ENCODE measurements at regions of chr5 and their contacts with region 1.

Region 1: DNA sequence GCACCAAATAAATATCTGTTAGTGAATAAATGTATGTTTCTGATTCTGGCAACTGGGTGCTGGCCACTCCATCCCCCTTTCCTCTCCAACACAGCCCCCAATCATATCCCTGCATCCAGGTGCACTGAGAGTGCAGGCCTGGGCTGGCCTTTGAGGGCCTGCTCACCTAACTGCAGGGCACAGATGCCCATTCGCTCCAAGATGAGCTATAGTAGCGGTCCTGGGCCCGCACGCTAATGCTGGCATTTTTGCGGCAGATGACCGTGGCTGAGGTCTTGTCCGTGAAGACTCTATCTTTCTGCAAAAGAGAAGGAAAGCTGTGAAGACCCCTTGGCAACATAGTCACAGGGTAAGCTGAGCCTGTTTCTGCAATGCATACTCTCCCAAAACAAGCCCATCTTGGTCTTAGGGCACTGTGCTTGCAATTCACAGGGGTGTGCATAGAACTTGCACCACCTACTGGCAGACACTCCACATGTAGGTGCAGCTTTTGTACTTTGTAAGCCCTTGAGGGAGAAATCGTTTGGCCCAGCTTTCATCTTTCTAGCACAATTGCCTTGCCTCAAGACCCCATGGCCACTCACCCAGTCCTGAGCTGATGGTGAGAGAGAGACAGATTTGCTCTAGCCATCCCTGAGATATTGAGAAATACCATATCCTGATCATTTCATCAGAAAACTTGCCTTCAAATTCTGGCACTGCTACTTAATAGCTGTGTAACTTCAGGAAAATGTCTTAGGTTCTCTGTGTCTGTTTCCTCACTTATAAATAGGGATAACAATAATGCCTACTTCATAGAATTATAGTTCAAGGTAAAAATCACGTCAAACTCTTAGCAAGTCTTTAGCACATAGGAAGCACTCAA is 13.5 kb downstream of the IL12B start:
- DNase-seq: peak; percentile 35
- ATAC-seq: peak; percentile 96
- H3K4me3 ChIP-seq: no peak overlapping the region
- H3K27ac ChIP-seq: no peak overlapping the region
- H3K4me1 ChIP-seq: no peaks in the 10 kb centered on the region
- H3K27me3 ChIP-seq: peaks cover 6% of the 10 kb centered on the region
- CTCF ChIP-seq: peak; percentile 84

Region 2: GRCh38 chr5:159156426-159157238 is 160.1 kb before region 1 on chr5:
- CTCF ChIA-PET with region 1: interaction called, 12 read pairs
- POLR2A ChIA-PET with region 1: no interaction called
- in situ Hi-C with region 1: no loop called
- intact Hi-C with region 1: loop called (anchors 2 kb)
- DNase-seq: peak; percentile 32
- ATAC-seq: peak; percentile 91
- H3K4me3 ChIP-seq: no peak overlapping the region
- H3K27ac ChIP-seq: no peak overlapping the region
- H3K4me1 ChIP-seq: no peaks in the 10 kb centered on the region
- H3K27me3 ChIP-seq: no peaks in the 10 kb centered on the region
- CTCF ChIP-seq: peak; percentile 84

Region 3: GRCh38 chr5:159286420-159287035 is 30.2 kb before region 1 on chr5:
- CTCF ChIA-PET with region 1: interaction called, 10 read pairs
- POLR2A ChIA-PET with region 1: no interaction called
- in situ Hi-C with region 1: no loop called
- intact Hi-C with region 1: no loop called
- DNase-seq: no peak
- ATAC-seq: peak; percentile 45; the same call in 1 of the 2 replicates
- H3K4me3 ChIP-seq: no peak overlapping the region
- H3K27ac ChIP-seq: no peak overlapping the region
- H3K4me1 ChIP-seq: no peaks in the 10 kb centered on the region
- H3K27me3 ChIP-seq: no peaks in the 10 kb centered on the region
- CTCF ChIP-seq: peak; percentile 41; the same call in 1 of the 2 replicates

Region 4: GRCh38 chr5:159341914-159342313 is 25.2 kb after region 1 on chr5:
- CTCF ChIA-PET with region 1: no interaction called
- POLR2A ChIA-PET with region 1: no interaction called
- in situ Hi-C with region 1: no loop called
- intact Hi-C with region 1: no loop called
- DNase-seq: no peak
- ATAC-seq: no peak
- H3K4me3 ChIP-seq: no peak overlapping the region
- H3K27ac ChIP-seq: no peak overlapping the region
- H3K4me1 ChIP-seq: no peaks in the 10 kb centered on the region
- H3K27me3 ChIP-seq: no peaks in the 10 kb centered on the region
- CTCF ChIP-seq: no peak

Region 5: GRCh38 chr5:159576902-159577301 is 260.2 kb after region 1 on chr5:
- CTCF ChIA-PET with region 1: no interaction called
- POLR2A ChIA-PET with region 1: no interaction called
- in situ Hi-C with region 1: no loop called
- intact Hi-C with region 1: no loop called
- DNase-seq: no peak
- ATAC-seq: no peak
- H3K4me3 ChIP-seq: no peak overlapping the region
- H3K27ac ChIP-seq: no peak overlapping the region
- H3K4me1 ChIP-seq: 0 out of 2 replicates have a peak, but pooled peaks cover 4% of the 10 kb centered on the region
- H3K27me3 ChIP-seq: no peaks in the 10 kb centered on the region
- CTCF ChIP-seq: no peak

Region 6: GRCh38 chr5:160092960-160093707 is 776.4 kb after region 1 on chr5:
- CTCF ChIA-PET with region 1: no interaction called
- POLR2A ChIA-PET with region 1: no interaction called
- in situ Hi-C with region 1: no loop called
- intact Hi-C with region 1: no loop called
- DNase-seq: no peak
- ATAC-seq: no peak
- H3K4me3 ChIP-seq: no peak overlapping the region
- H3K27ac ChIP-seq: no peak overlapping the region
- H3K4me1 ChIP-seq: no peaks in the 10 kb centered on the region
- H3K27me3 ChIP-seq: no peaks in the 10 kb centered on the region
- CTCF ChIP-seq: no peak

Measured in Panc1 (cell line).